ENCODE measurements at regions of chr4 and their contacts with region 1.

Region 1: DNA sequence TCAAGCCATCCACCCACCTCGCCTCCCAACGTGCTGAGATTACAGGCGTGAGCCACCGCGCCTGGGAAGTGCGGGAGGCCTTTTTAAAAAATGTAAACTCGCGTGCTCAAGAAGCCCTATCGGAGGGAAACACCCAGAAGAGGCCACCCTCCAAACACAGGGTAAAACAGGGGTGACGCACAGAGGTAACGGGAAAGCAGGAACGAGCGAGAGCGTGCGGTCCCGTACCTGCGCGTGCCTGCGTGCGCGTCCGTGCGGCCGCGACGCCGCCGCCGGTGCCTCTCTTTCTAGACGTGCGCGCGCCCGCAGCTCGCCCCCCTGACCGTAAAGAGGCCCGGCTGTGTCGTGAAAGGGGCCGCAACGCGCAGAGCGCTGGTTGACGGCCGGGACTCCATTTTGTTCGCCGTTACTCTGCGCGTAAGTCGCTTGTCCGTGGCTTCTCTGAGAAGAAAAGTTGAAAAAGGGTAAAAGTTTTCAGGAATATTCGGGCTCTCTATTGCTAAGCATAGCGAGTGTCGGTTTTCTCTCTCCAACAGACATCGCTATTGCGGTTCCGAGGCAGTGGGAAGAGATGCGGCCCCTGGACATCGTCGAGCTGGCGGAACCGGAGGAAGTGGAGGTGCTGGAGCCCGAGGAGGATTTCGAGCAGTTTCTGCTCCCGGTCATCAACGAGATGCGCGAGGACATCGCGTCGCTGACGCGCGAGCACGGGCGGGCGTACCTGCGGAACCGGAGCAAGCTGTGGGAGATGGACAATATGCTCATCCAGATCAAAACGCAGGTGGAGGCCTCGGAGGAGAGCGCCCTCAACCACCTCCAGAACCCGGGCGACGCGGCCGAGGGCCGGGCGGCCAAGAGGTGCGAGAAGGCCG is at the start of gene MRFAP1:
- DNase-seq: peak; percentile 77 to 97
- H3K4me3 ChIP-seq: peak within 1 kb of the TSS; percentile 76 to 89
- H3K27ac ChIP-seq: peak within 1 kb of the TSS; percentile 94 to 97
- H3K4me1 ChIP-seq: peaks cover 4 to 16% of the 10 kb centered on the region in 2 donors
- H3K27me3 ChIP-seq: no peaks in the 10 kb centered on the region
- CTCF ChIP-seq: no peak
- total RNA-seq, gene MRFAP1: 109 TPM

Region 2: GRCh38 chr4:6574747-6575502 is 65.6 kb before region 1 on chr4 and contains the start of gene MAN2B2:
- intact Hi-C with region 1: loop called (anchors 2 kb)
- DNase-seq: peak; percentile 24 to 94
- H3K4me3 ChIP-seq: peak within 1 kb of the TSS; percentile 75 to 93
- H3K27ac ChIP-seq: peak within 1 kb of the TSS; percentile 68 to 69
- H3K4me1 ChIP-seq: peaks cover 7 to 13% of the 10 kb centered on the region in 2 donors
- H3K27me3 ChIP-seq: no peaks in the 10 kb centered on the region
- CTCF ChIP-seq: no peak
- total RNA-seq, gene MAN2B2: 47.8 TPM

Region 3: GRCh38 chr4:6595897-6596537 is 44.5 kb before region 1 on chr4:
- intact Hi-C with region 1: no loop called
- DNase-seq: no peak
- H3K4me3 ChIP-seq: no peak overlapping the region
- H3K27ac ChIP-seq: no peak overlapping the region
- H3K4me1 ChIP-seq: no peaks in the 10 kb centered on the region
- H3K27me3 ChIP-seq: no peaks in the 10 kb centered on the region
- CTCF ChIP-seq: no peak

Region 4: DNA sequence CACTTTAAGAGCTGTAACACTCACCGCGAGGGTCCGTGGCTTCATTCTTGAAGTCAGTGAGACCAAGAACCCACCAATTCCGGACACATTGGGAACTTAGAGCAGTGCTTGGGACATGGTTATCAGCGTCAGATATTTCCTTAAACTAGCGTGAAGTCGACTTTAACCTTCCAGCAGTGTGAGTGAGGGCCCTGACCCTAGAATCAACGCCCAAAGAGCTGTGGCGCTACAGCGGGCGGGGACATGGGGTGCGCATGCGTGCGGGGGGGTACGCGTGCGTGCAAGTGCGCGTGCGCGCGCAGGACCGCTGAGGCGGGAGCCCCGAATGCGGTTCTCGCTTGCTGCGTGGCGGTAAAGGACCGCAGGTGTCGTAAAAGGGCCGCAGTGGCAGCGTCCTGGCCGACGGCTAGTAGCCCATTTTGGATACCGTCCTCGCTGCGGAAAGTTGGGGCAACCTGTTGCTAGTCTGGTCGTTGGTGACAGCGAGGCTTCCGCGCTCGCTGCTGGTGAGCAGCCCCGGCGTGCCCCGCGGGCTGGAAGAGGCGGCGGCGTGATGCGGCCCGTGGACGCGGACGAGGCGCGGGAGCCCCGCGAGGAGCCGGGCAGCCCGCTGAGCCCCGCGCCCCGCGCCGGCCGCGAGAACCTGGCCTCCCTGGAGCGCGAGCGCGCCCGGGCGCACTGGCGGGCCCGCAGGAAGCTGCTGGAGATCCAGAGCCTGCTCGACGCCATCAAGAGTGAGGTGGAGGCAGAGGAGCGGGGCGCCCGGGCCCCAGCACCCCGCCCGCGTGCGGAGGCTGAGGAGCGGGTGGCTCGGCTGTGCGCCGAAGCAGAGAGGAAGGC is 33.4 kb after region 1 on chr4:
- intact Hi-C with region 1: loop called (anchors 1 kb)
- DNase-seq: peak; percentile 84 to 96
- H3K4me3 ChIP-seq: peak overlapping the region; percentile 93
- H3K27ac ChIP-seq: peak overlapping the region; percentile 68 to 87
- H3K4me1 ChIP-seq: peaks cover 14 to 26% of the 10 kb centered on the region in 2 donors
- H3K27me3 ChIP-seq: no peaks in the 10 kb centered on the region
- CTCF ChIP-seq: no peak

Region 5: GRCh38 chr4:6716018-6716911 is 75.7 kb after region 1 on chr4 and contains the start of gene BLOC1S4:
- intact Hi-C with region 1: loop called (anchors 1 kb)
- DNase-seq: peak; percentile 36 to 91
- H3K4me3 ChIP-seq: peak within 1 kb of the TSS; percentile 87 to 98
- H3K27ac ChIP-seq: peak within 1 kb of the TSS; percentile 88 to 95
- H3K4me1 ChIP-seq: peaks cover 4 to 14% of the 10 kb centered on the region in 2 donors
- H3K27me3 ChIP-seq: no peaks in the 10 kb centered on the region
- CTCF ChIP-seq: peak; percentile 21 to 31 (median 23)
- total RNA-seq, gene BLOC1S4: 37.5 TPM

Region 6: GRCh38 chr4:6885951-6886557 is 245.5 kb after region 1 on chr4:
- intact Hi-C with region 1: loop called (anchors 10 kb)
- DNase-seq: peak; percentile 50 to 87
- H3K4me3 ChIP-seq: peak overlapping the region in 1 of 2 donors; percentile 37
- H3K27ac ChIP-seq: peak overlapping the region; percentile 79 to 80
- H3K4me1 ChIP-seq: peaks cover 2 to 14% of the 10 kb centered on the region in 2 donors
- H3K27me3 ChIP-seq: no peaks in the 10 kb centered on the region
- CTCF ChIP-seq: peak in 1 of 3 experiments; percentile 33

Region 7: GRCh38 chr4:7042697-7043464 is 402.4 kb after region 1 on chr4 and contains the start of gene TADA2B:
- intact Hi-C with region 1: loop called (anchors 2 kb)
- DNase-seq: peak; percentile 91 to 99
- H3K4me3 ChIP-seq: peak within 1 kb of the TSS; percentile 99 to 100
- H3K27ac ChIP-seq: peak within 1 kb of the TSS; percentile 90 to 92
- H3K4me1 ChIP-seq: peaks cover 27% of the 10 kb centered on the region in 2 donors
- H3K27me3 ChIP-seq: no peaks in the 10 kb centered on the region
- CTCF ChIP-seq: peak in 2 of 3 experiments; percentile 5 to 85
- total RNA-seq, gene TADA2B: 37.3 TPM

Measured in ascending aorta (tissue), 2 donors.